Activated B cell treated with CpG ODN at 0.5 μM for 24 hours (primary cell): ENCODE measurements at regions of chr12 and their contacts with region 1.

Region 1: GRCh38 chr12:31325877-31326631 is at the start of gene SINHCAF:
- DNase-seq: peak; percentile 99
- ATAC-seq: peak; percentile 62
- H3K4me3 Mint-ChIP-seq: peak within 1 kb of the TSS; percentile 96
- H3K27ac Mint-ChIP-seq: peak within 1 kb of the TSS; percentile 97
- H3K4me1 Mint-ChIP-seq: peaks cover 34% of the 10 kb centered on the region
- H3K27me3 Mint-ChIP-seq: no peaks in the 10 kb centered on the region
- CTCF ChIP-seq: no peak
- total RNA-seq, gene SINHCAF: 153 and 157 TPM in 2 replicates

Region 2: DNA sequence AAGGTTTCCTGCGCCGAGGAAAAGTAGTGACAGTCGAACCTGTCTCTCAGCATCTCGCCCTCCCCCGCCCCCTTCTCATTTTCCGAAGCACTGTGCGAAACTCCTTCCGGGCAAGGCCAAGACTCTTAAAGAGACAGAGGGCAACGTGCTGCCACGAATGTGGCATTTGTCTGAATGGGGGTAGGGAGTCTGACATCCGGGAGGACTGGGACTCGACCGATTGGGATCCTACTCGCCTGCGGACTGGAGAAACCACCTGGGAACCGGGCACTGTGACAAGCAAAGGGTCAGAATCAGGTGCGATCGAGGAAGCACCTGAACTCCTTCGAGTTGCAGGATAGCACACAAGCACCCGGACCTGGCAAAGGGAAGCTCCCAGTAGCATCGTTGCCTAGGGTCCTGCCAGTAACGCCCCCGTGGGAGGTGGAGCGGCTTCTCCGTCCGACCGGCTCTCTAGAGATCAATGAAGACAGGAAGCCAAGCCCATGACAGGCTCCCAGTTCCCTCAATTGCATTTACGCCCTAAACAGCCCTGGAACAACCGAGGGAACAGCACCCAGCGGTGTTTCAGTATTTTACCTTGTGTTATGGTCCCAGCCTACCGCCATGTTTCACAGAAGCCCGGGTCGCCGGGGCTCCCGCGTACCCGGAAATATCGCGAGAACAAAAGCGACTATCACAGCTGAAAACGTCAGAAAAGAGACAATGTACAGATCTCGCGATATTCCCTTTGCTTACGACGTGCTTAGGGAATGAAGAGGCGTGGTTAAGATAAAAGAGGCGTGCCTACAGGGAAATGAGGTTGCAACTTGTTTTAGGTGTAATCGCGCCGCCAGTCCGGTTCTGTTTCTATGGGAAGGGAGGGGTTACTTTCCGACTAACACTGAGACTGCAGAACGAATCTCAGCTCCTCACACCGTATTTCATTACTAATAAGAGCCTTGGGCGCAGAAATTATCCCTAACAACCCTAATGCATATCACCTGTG is 1945.2 kb before region 1 on chr12 and contains the start of gene ERGIC2:
- CTCF ChIA-PET with region 1: no interaction called
- POLR2A ChIA-PET with region 1: no interaction called
- intact Hi-C with region 1: loop called (anchors 10 kb)
- DNase-seq: peak; percentile 73
- ATAC-seq: peak; percentile 94
- H3K4me3 Mint-ChIP-seq: peak within 1 kb of the TSS; percentile 94
- H3K27ac Mint-ChIP-seq: peak within 1 kb of the TSS; percentile 94
- H3K4me1 Mint-ChIP-seq: peaks cover 42% of the 10 kb centered on the region
- H3K27me3 Mint-ChIP-seq: no peaks in the 10 kb centered on the region
- CTCF ChIP-seq: no peak
- total RNA-seq, gene ERGIC2: 43.7 TPM in 2 replicates

Region 3: DNA sequence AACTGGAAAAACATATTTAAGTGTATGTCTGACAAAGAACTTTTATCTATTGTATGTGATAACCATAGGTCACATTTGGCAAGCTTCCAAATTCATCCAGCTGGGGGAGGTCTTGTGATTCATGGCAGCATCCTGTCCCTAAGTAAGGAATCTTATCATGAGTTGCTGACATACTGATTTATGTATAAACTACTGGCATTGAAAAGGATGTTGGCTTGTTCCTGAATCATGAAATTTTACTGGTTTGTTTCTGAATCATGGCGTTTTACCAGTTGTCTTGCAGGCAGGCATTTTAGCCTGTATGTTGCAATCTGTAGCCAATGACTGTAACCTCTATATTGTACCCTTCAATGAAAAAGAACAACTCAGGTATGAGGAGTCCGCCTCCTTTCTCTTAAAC is 875.2 kb before region 1 on chr12:
- CTCF ChIA-PET with region 1: no interaction called
- POLR2A ChIA-PET with region 1: no interaction called
- intact Hi-C with region 1: no loop called
- DNase-seq: no peak
- ATAC-seq: no peak
- H3K4me3 Mint-ChIP-seq: no peak overlapping the region
- H3K27ac Mint-ChIP-seq: no peak overlapping the region
- H3K4me1 Mint-ChIP-seq: no peaks in the 10 kb centered on the region
- H3K27me3 Mint-ChIP-seq: no peaks in the 10 kb centered on the region
- CTCF ChIP-seq: no peak

Region 4: DNA sequence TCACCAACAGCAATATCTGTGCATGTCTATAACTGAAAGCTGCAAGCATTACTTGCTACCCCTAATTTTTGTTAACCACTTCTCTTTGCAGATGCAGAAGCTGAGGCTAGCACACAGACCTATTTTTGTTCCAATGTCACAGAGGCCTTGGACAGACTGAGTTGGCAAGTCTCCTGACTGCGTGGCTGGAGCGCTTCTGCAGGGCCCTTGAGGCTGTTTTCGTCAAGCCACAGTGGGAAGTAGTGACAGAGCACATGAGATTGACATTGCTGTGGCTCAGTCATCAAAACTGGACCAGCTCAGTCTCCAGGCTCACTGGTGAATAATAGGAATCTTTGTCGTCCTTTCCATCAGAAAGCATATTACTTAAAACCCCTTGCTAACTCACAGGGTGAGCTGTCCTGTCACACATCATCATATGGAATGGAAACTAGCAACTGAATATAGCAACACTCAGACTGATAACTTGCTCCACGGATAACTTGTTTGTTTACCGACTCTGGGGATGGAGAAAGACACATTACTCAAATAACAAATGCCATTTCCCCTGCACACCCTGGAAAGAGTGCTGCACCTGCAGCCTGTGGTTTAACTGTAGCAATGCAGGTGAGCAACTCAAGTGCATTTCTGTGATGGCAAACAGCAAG is 296.0 kb before region 1 on chr12:
- CTCF ChIA-PET with region 1: no interaction called
- POLR2A ChIA-PET with region 1: no interaction called
- intact Hi-C with region 1: no loop called
- DNase-seq: no peak
- ATAC-seq: no peak
- H3K4me3 Mint-ChIP-seq: no peak overlapping the region
- H3K27ac Mint-ChIP-seq: no peak overlapping the region
- H3K4me1 Mint-ChIP-seq: no peaks in the 10 kb centered on the region
- H3K27me3 Mint-ChIP-seq: no peaks in the 10 kb centered on the region
- CTCF ChIP-seq: no peak

Region 5: DNA sequence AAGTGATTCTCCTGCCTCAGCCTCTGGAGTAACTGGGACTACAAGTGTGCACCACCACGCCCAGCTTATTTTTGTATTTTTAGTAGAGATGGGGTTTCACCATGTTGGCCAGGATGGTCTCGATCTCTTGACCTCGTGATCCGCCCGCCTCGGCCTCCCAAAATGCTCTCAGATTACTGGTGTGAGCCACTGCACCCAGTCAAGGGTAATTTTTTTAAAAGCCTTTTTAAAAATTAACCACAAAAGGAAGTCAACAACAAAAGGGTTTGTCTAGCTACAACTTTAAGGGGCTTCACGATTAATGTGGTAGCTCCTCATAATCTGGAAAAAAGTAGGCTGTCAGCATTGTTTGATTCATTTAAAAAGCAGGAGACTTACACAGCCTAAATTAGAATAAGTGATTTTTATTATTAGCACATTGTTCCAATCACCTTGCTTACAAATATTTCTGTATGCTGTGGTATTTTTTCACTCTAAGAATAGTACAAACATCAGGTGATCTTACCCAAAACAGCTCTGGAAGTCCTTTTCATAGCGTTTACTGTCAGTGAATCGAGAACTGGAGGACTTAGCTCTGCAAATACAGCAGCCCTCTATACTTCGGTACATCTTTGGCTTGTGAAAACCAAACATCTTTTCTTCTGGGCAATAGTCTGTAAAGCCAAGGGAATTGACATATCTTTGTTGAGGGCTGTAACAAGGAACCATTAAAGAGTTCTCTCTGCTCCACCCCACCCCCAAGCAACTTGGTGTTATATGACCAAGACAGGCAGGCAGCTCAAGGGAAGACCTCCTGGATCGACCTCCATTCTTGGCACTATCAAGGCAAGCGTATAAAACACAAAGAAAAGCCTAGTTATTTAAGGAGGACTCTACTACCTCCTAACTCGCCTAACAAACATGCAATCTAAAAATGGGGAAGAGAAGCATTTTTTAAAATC is 28.2 kb before region 1 on chr12:
- CTCF ChIA-PET with region 1: interaction called, 3 read pairs
- POLR2A ChIA-PET with region 1: interaction called, 116 read pairs
- intact Hi-C with region 1: loop called (anchors 1 kb)
- DNase-seq: no peak
- ATAC-seq: peak; percentile 22
- H3K4me3 Mint-ChIP-seq: peak overlapping the region; percentile 78
- H3K27ac Mint-ChIP-seq: peak overlapping the region; percentile 95
- H3K4me1 Mint-ChIP-seq: peaks cover 64% of the 10 kb centered on the region
- H3K27me3 Mint-ChIP-seq: no peaks in the 10 kb centered on the region
- CTCF ChIP-seq: no peak

Region 6: GRCh38 chr12:31440586-31440985 is 114.5 kb after region 1 on chr12:
- CTCF ChIA-PET with region 1: no interaction called
- POLR2A ChIA-PET with region 1: no interaction called
- intact Hi-C with region 1: no loop called
- DNase-seq: no peak
- ATAC-seq: no peak
- H3K4me3 Mint-ChIP-seq: no peak overlapping the region
- H3K27ac Mint-ChIP-seq: no peak overlapping the region
- H3K4me1 Mint-ChIP-seq: peaks cover 2% of the 10 kb centered on the region
- H3K27me3 Mint-ChIP-seq: no peaks in the 10 kb centered on the region
- CTCF ChIP-seq: no peak

Region 7: GRCh38 chr12:31456562-31456961 is 130.5 kb after region 1 on chr12:
- CTCF ChIA-PET with region 1: no interaction called
- POLR2A ChIA-PET with region 1: interaction called, 10 read pairs
- intact Hi-C with region 1: no loop called
- DNase-seq: no peak
- ATAC-seq: no peak
- H3K4me3 Mint-ChIP-seq: no peak overlapping the region
- H3K27ac Mint-ChIP-seq: no peak overlapping the region
- H3K4me1 Mint-ChIP-seq: peaks cover 12% of the 10 kb centered on the region
- H3K27me3 Mint-ChIP-seq: no peaks in the 10 kb centered on the region
- CTCF ChIP-seq: no peak

Region 8: GRCh38 chr12:31736472-31736871 is 410.4 kb after region 1 on chr12:
- CTCF ChIA-PET with region 1: no interaction called
- POLR2A ChIA-PET with region 1: interaction called, 10 read pairs
- intact Hi-C with region 1: no loop called
- DNase-seq: no peak
- ATAC-seq: peak; percentile 79
- H3K4me3 Mint-ChIP-seq: peak overlapping the region; percentile 20
- H3K27ac Mint-ChIP-seq: peak overlapping the region; percentile 73
- H3K4me1 Mint-ChIP-seq: peaks cover 63% of the 10 kb centered on the region
- H3K27me3 Mint-ChIP-seq: no peaks in the 10 kb centered on the region
- CTCF ChIP-seq: no peak

Region 9: GRCh38 chr12:32679091-32679919 is 1353.3 kb after region 1 on chr12 and contains the start of gene DNM1L:
- CTCF ChIA-PET with region 1: no interaction called
- POLR2A ChIA-PET with region 1: no interaction called
- intact Hi-C with region 1: loop called (anchors 1 kb)
- DNase-seq: peak; percentile 86
- ATAC-seq: peak; percentile 95
- H3K4me3 Mint-ChIP-seq: peak within 1 kb of the TSS; percentile 90
- H3K27ac Mint-ChIP-seq: peak within 1 kb of the TSS; percentile 83
- H3K4me1 Mint-ChIP-seq: peaks cover 36% of the 10 kb centered on the region
- H3K27me3 Mint-ChIP-seq: no peaks in the 10 kb centered on the region
- CTCF ChIP-seq: no peak
- total RNA-seq, gene DNM1L: 67.8 and 83.1 TPM in 2 replicates